ENCODE measurements at regions of chr6 and their contacts with region 1.

Region 1: DNA sequence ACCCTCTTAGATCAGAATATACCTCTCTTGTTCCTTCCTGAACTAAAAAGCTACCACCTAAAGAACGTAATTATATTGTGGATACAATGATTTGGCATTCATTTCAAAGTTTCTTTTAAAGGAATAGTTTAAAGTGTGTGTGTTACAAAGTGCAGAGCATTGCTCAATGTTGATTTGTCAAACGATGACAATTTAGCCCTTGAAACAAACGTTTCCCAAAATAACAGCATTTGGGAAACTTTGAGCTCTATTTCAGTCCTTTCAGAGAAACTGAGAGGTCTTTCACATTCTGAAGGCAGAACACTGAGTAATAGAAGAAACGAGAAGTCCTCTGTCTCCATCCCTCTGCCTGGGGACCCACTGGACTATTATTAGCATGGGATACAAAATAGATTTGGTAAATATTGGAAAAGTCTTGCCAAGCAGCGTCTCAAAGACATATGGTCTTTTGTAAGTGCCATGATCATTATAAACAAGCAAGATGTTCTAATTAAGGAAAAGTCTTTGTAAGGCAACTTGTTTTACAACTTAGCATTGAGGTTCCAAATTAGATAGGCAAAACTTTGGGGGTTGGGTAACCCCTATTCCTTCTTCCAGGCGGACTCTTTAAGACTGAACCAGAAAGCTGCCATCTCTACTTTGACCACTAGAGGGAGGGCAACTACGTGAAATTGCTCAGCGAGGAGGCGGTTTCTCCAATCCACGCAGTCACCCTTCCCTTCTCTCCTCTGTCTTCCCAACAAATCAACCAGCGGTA is 208.8 kb downstream of the RNF144B start:
- DNase-seq: peak; percentile 57
- ATAC-seq: peak; percentile 69
- H3K4me3 Mint-ChIP-seq: no peak overlapping the region
- H3K27ac Mint-ChIP-seq: no peak overlapping the region
- H3K4me1 Mint-ChIP-seq: no peaks in the 10 kb centered on the region
- H3K27me3 Mint-ChIP-seq: peaks cover 12% of the 10 kb centered on the region

Region 2: GRCh38 chr6:17950095-17950494 is 645.9 kb before region 1 on chr6:
- CTCF ChIA-PET with region 1: no interaction called
- POLR2A ChIA-PET with region 1: no interaction called
- intact Hi-C with region 1: no loop called
- DNase-seq: no peak
- ATAC-seq: no peak
- H3K4me3 Mint-ChIP-seq: no peak overlapping the region
- H3K27ac Mint-ChIP-seq: no peak overlapping the region
- H3K4me1 Mint-ChIP-seq: no peaks in the 10 kb centered on the region
- H3K27me3 Mint-ChIP-seq: peaks cover 2% of the 10 kb centered on the region

Region 3: GRCh38 chr6:18323935-18324705 is 271.8 kb before region 1 on chr6:
- CTCF ChIA-PET with region 1: interaction called, 3 read pairs
- POLR2A ChIA-PET with region 1: no interaction called
- intact Hi-C with region 1: loop called in 1 of 2 experiments (anchors 10 kb)
- DNase-seq: no peak
- ATAC-seq: peak; percentile 49
- H3K4me3 Mint-ChIP-seq: no peak overlapping the region
- H3K27ac Mint-ChIP-seq: no peak overlapping the region
- H3K4me1 Mint-ChIP-seq: peaks cover 14% of the 10 kb centered on the region
- H3K27me3 Mint-ChIP-seq: peaks cover 10% of the 10 kb centered on the region

Region 4: GRCh38 chr6:18823782-18824386 is 227.9 kb after region 1 on chr6:
- CTCF ChIA-PET with region 1: no interaction called
- POLR2A ChIA-PET with region 1: no interaction called
- intact Hi-C with region 1: loop called (anchors 1 to 5 kb)
- DNase-seq: peak; percentile 76
- ATAC-seq: no peak
- H3K4me3 Mint-ChIP-seq: no peak overlapping the region
- H3K27ac Mint-ChIP-seq: no peak overlapping the region
- H3K4me1 Mint-ChIP-seq: no peaks in the 10 kb centered on the region
- H3K27me3 Mint-ChIP-seq: no peaks in the 10 kb centered on the region

Region 5: DNA sequence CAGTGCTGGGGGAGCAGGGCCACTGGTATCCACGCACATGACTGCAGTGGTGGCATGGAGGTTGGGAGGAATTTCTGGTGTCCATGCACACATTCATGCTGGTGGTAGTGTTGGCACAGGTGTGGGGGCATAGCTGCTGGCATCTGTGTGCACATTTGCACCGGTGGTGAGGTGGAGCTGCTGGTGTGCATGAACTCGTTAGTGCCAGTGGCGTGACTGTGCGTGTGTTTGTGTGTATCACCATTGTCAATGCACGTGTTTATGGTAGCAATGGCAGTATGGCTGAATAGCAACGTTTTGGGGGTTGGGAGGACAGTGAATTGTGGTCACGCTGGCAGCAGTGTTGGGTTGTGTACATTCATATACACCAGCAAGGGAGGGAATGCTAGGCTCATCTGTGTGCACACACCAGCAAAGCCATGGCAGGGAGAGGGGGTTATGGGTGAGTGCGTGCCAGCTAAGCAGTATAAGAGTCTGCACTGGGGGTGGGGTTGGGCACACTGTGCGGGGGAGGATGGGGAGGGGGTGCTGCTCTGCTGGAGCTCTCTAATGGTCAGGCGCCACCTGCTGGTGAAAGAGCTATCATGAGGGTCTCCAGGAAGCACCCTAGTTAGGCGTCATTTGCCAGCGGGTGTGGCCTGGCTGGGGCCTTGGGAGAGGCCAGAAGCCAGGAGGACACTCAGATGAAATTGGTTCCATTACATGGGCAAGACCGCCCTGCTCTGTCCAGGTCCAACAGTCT is 615.1 kb after region 1 on chr6:
- CTCF ChIA-PET with region 1: interaction called, 3 read pairs
- POLR2A ChIA-PET with region 1: no interaction called
- intact Hi-C with region 1: loop called in 1 of 2 experiments (anchors 5 kb)
- DNase-seq: peak; percentile 48
- ATAC-seq: no peak
- H3K4me3 Mint-ChIP-seq: no peak overlapping the region
- H3K27ac Mint-ChIP-seq: no peak overlapping the region
- H3K4me1 Mint-ChIP-seq: no peaks in the 10 kb centered on the region
- H3K27me3 Mint-ChIP-seq: no peaks in the 10 kb centered on the region

Region 6: GRCh38 chr6:20056350-20056992 is 1460.5 kb after region 1 on chr6:
- CTCF ChIA-PET with region 1: no interaction called
- POLR2A ChIA-PET with region 1: no interaction called
- intact Hi-C with region 1: loop called in 1 of 2 experiments (anchors 1 kb)
- DNase-seq: no peak
- ATAC-seq: no peak
- H3K4me3 Mint-ChIP-seq: no peak overlapping the region
- H3K27ac Mint-ChIP-seq: no peak overlapping the region
- H3K4me1 Mint-ChIP-seq: no peaks in the 10 kb centered on the region
- H3K27me3 Mint-ChIP-seq: no peaks in the 10 kb centered on the region

Region 7: GRCh38 chr6:20126789-20127653 is 1531.1 kb after region 1 on chr6:
- CTCF ChIA-PET with region 1: no interaction called
- POLR2A ChIA-PET with region 1: no interaction called
- intact Hi-C with region 1: loop called in 1 of 2 experiments (anchors 5 kb)
- DNase-seq: peak; percentile 82
- ATAC-seq: peak; percentile 74
- H3K4me3 Mint-ChIP-seq: no peak overlapping the region
- H3K27ac Mint-ChIP-seq: no peak overlapping the region
- H3K4me1 Mint-ChIP-seq: no peaks in the 10 kb centered on the region
- H3K27me3 Mint-ChIP-seq: no peaks in the 10 kb centered on the region